CD8-positive, alpha-beta T cell (primary cell): ENCODE measurements at regions of chr11 and their contacts with region 1.

Region 1: GRCh38 chr11:72222907-72223614 is 1.5 kb upstream of the INPPL1 start:
- DNase-seq: peak; percentile 83 to 97 (median 94)
- ATAC-seq: peak; percentile 78
- H3K4me3 ChIP-seq: peak overlapping the region; percentile 48 to 84
- H3K4me3 Mint-ChIP-seq: peak overlapping the region; percentile 87
- H3K27ac ChIP-seq: peak overlapping the region; percentile 23 to 78
- H3K27ac Mint-ChIP-seq: peak overlapping the region; percentile 90
- H3K4me1 ChIP-seq: peaks cover 21% of the 10 kb centered on the region
- H3K4me1 Mint-ChIP-seq: peaks cover 22% of the 10 kb centered on the region
- H3K27me3 ChIP-seq: no peaks in the 10 kb centered on the region
- H3K27me3 Mint-ChIP-seq: peaks cover 4% of the 10 kb centered on the region
- CTCF ChIP-seq: no peak

Region 2: GRCh38 chr11:70580036-70580845 is 1642.8 kb before region 1 on chr11:
- CTCF ChIA-PET with region 1: no interaction called
- POLR2A ChIA-PET with region 1: no interaction called
- intact Hi-C with region 1: no loop called
- DNase-seq: no peak
- ATAC-seq: no peak
- H3K4me3 ChIP-seq: no peak overlapping the region
- H3K4me3 Mint-ChIP-seq: no peak overlapping the region
- H3K27ac ChIP-seq: no peak overlapping the region
- H3K27ac Mint-ChIP-seq: no peak overlapping the region
- H3K4me1 ChIP-seq: no peaks in the 10 kb centered on the region
- H3K4me1 Mint-ChIP-seq: no peaks in the 10 kb centered on the region
- H3K27me3 ChIP-seq: no peaks in the 10 kb centered on the region
- H3K27me3 Mint-ChIP-seq: peaks cover 5% of the 10 kb centered on the region
- CTCF ChIP-seq: no peak

Region 3: GRCh38 chr11:71448257-71449171 is 774.5 kb before region 1 on chr11 and contains the start of gene DHCR7:
- CTCF ChIA-PET with region 1: no interaction called
- POLR2A ChIA-PET with region 1: no interaction called
- intact Hi-C with region 1: loop called in 1 of 2 experiments (anchors 5 kb)
- DNase-seq: peak; percentile 80 to 95 (median 93)
- ATAC-seq: peak; percentile 70
- H3K4me3 ChIP-seq: peak within 1 kb of the TSS; percentile 77 to 98
- H3K4me3 Mint-ChIP-seq: peak within 1 kb of the TSS; percentile 93
- H3K27ac ChIP-seq: peak within 1 kb of the TSS; percentile 80 to 82
- H3K27ac Mint-ChIP-seq: peak within 1 kb of the TSS; percentile 90
- H3K4me1 ChIP-seq: peaks cover 32% of the 10 kb centered on the region
- H3K4me1 Mint-ChIP-seq: peaks cover 47% of the 10 kb centered on the region
- H3K27me3 ChIP-seq: no peaks in the 10 kb centered on the region
- H3K27me3 Mint-ChIP-seq: no peaks in the 10 kb centered on the region
- CTCF ChIP-seq: no peak
- total RNA-seq, gene DHCR7: 33.9 to 40.0 TPM

Region 4: DNA sequence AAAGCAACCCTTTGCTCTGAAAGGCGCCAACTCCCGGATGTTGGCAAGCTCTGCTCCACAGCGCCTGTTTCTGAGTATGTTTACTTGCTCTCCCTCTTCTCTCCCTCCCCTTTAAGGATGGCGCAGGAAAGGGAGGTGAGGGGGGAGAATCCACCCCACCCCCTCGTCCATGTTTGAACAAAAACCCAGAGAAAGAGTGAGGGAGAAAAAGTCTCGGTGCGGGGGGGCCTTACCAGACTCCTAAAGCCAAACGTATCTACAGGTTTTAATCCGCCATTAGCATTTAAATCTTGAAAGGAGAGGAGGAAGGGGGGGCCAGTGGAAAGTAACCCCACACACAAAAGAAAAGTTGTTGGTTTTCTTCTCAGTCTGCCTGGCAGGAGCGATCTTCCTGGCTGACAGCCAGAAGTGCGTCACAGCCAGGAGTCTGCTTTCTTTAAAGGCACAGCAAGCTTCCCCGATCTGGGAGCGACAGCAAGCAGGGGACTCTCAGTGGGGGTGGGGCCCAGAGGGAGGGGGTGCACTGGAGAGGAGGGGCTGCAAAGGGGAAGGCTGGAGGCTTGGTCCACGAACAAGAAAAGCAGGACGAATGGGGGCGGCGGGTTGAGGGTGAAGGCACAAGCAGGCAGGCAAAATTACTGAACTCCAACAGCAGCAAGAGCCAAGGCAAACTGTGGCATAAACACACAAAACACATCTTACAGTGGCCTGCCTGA is 182.2 kb before region 1 on chr11:
- CTCF ChIA-PET with region 1: no interaction called
- POLR2A ChIA-PET with region 1: interaction called, 8 read pairs
- intact Hi-C with region 1: loop called (anchors 1 kb)
- DNase-seq: peak; percentile 52 to 92 (median 85)
- ATAC-seq: peak; percentile 77
- H3K4me3 ChIP-seq: peak overlapping the region; percentile 80 to 82
- H3K4me3 Mint-ChIP-seq: no peak overlapping the region
- H3K27ac ChIP-seq: peak overlapping the region; percentile 93 to 96
- H3K27ac Mint-ChIP-seq: no peak overlapping the region
- H3K4me1 ChIP-seq: peaks cover 72% of the 10 kb centered on the region
- H3K4me1 Mint-ChIP-seq: peaks cover 40% of the 10 kb centered on the region
- H3K27me3 ChIP-seq: no peaks in the 10 kb centered on the region
- H3K27me3 Mint-ChIP-seq: no peaks in the 10 kb centered on the region
- CTCF ChIP-seq: no peak

Region 5: DNA sequence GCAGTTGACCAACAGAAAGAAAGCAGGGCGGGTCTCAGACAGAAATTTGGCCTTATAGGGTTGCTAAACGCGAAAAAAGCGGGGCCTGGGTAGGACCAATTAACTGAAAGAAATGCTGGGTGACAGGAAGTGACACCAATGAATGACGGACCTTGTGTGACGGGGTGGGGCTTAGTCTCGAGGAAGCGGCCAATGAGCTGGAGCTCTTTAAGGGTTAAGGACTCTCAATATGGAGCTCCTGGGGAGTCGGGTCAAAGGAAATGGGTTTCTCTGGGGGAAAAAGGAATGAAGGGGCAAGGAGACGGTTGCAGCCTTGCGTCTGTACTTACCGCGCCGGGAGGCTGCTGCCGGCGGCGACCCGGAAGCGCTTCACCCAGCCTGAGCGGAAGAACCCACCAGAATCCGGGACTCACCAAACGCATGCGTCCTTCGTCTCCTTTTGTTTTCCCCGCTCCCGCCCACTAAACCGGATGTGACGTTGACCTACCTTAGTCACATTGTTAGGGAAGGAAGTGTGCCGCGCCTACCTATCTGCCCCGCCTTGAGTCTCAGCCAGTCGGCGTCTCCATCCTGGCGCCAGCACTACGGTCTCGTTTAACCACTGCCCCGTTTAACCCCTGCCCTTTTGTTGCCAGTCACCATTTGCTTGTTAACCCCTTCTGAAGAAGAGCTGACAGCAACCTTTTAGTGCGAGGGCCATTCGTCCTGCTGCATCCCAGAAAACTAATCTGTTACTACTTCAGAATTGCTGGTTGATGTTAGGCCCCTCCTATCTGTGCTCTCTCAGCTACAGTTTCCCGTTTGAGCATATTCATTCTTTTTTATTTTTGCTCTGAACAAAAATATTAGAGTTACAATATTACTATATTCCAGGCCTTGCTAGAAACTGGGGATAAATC is 110.5 kb before region 1 on chr11 and contains the start of gene ANAPC15:
- CTCF ChIA-PET with region 1: no interaction called
- POLR2A ChIA-PET with region 1: interaction called, 12 read pairs
- intact Hi-C with region 1: loop called (anchors 1 kb)
- DNase-seq: peak; percentile 95 to 100 (median 98)
- ATAC-seq: peak; percentile 85
- H3K4me3 ChIP-seq: peak within 1 kb of the TSS; percentile 63 to 65
- H3K4me3 Mint-ChIP-seq: peak within 1 kb of the TSS; percentile 96
- H3K27ac ChIP-seq: peak within 1 kb of the TSS; percentile 88 to 94
- H3K27ac Mint-ChIP-seq: peak within 1 kb of the TSS; percentile 99
- H3K4me1 ChIP-seq: peaks cover 16% of the 10 kb centered on the region
- H3K4me1 Mint-ChIP-seq: peaks cover 23% of the 10 kb centered on the region
- H3K27me3 ChIP-seq: no peaks in the 10 kb centered on the region
- H3K27me3 Mint-ChIP-seq: peaks cover 4% of the 10 kb centered on the region
- CTCF ChIP-seq: no peak
- total RNA-seq, gene ANAPC15: 42.1 to 46.2 TPM

Region 6: DNA sequence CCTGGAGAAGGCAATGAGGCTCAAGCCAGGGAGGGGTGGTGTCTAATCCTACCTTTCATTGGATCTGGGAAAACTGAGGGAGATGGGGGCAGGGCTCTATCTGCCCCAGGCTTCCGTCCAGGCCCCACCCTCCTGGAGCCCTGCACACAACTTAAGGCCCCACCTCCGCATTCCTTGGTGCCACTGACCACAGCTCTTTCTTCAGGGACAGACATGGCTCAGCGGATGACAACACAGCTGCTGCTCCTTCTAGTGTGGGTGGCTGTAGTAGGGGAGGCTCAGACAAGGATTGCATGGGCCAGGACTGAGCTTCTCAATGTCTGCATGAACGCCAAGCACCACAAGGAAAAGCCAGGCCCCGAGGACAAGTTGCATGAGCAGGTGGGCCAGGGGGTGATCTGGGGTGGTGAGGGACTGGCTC is 31.1 kb before region 1 on chr11 and contains the start of gene FOLR1:
- CTCF ChIA-PET with region 1: no interaction called
- POLR2A ChIA-PET with region 1: no interaction called
- intact Hi-C with region 1: no loop called
- DNase-seq: no peak
- ATAC-seq: no peak
- H3K4me3 ChIP-seq: no peak within 1 kb of the TSS
- H3K4me3 Mint-ChIP-seq: no peak within 1 kb of the TSS
- H3K27ac ChIP-seq: no peak within 1 kb of the TSS
- H3K27ac Mint-ChIP-seq: no peak within 1 kb of the TSS
- H3K4me1 ChIP-seq: no peaks in the 10 kb centered on the region
- H3K4me1 Mint-ChIP-seq: no peaks in the 10 kb centered on the region
- H3K27me3 ChIP-seq: no peaks in the 10 kb centered on the region
- H3K27me3 Mint-ChIP-seq: no peaks in the 10 kb centered on the region
- CTCF ChIP-seq: no peak
- total RNA-seq, gene FOLR1: not detected

Region 7: DNA sequence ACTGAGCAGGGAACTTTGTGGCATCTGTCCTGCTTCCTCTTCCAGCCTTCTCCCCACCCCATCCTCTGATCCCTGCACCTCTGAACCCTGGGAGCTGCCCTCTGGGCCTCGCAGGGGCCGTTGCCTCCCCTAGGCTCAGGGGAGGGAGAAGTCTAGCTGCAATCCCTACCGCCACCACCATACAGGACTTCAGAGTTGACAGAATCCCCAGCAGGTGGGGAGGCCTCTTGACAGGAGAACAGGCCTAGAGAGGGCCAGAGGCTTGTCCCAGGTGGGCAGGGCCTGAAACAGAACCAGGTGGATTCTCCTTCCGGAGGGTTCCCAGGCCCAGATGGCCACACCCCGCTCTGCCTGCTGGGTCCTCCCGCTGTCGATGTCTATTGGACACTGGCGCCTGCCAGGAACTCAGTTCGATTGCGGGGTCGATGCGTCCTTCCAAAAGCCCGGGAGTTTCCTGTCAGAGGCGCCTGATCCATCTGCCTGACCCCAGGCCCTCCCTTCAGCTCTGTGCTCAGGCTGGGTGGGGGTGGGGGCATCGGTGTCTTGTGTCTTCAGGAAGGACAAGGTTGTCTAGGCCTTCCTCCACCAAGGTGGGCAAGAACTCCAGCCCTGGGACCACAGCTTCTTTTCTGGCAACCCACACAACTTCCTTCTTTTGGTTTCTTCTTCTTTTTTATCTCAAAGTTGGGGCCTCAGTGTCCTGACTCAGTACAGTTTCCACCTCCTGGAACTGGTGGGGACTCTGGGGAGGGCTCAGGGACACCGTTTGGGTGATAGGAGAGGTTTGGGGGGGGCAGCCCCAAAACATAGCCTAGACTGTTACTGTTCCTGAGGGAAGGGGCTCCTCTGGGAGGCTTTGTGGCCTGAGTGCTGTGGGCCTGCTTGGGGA is 564.4 kb after region 1 on chr11:
- CTCF ChIA-PET with region 1: no interaction called
- POLR2A ChIA-PET with region 1: no interaction called
- intact Hi-C with region 1: no loop called
- DNase-seq: peak in 1 of 9 experiments; percentile 31
- ATAC-seq: peak; percentile 44
- H3K4me3 ChIP-seq: no peak overlapping the region
- H3K4me3 Mint-ChIP-seq: no peak overlapping the region
- H3K27ac ChIP-seq: no peak overlapping the region
- H3K27ac Mint-ChIP-seq: no peak overlapping the region
- H3K4me1 ChIP-seq: peaks cover 7% of the 10 kb centered on the region
- H3K4me1 Mint-ChIP-seq: peaks cover 14% of the 10 kb centered on the region
- H3K27me3 ChIP-seq: no peaks in the 10 kb centered on the region
- H3K27me3 Mint-ChIP-seq: no peaks in the 10 kb centered on the region
- CTCF ChIP-seq: no peak

Region 8: GRCh38 chr11:72814286-72815109 is 591.4 kb after region 1 on chr11 and contains the start of gene ATG16L2:
- CTCF ChIA-PET with region 1: no interaction called
- POLR2A ChIA-PET with region 1: no interaction called
- intact Hi-C with region 1: loop called (anchors 2 to 5 kb)
- DNase-seq: peak; percentile 83 to 96 (median 88)
- ATAC-seq: peak; percentile 78
- H3K4me3 ChIP-seq: peak within 1 kb of the TSS; percentile 97 to 98
- H3K4me3 Mint-ChIP-seq: peak within 1 kb of the TSS; percentile 99
- H3K27ac ChIP-seq: peak within 1 kb of the TSS; percentile 99 to 100
- H3K27ac Mint-ChIP-seq: peak within 1 kb of the TSS; percentile 99
- H3K4me1 ChIP-seq: peaks cover 26% of the 10 kb centered on the region
- H3K4me1 Mint-ChIP-seq: peaks cover 48% of the 10 kb centered on the region
- H3K27me3 ChIP-seq: no peaks in the 10 kb centered on the region
- H3K27me3 Mint-ChIP-seq: no peaks in the 10 kb centered on the region
- CTCF ChIP-seq: peak; percentile 20
- total RNA-seq, gene ATG16L2: 45.7 to 52.8 TPM